ENCODE measurements at regions of chrX and their contacts with region 1.

Region 1: GRCh38 chrX:136209016-136209738 is 42.0 kb downstream of the MAP7D3 start:
- DNase-seq: peak; percentile 25 to 65
- H3K4me3 ChIP-seq: no peak overlapping the region
- H3K4me1 ChIP-seq: peaks cover 3% of the 10 kb centered on the region
- H3K27me3 ChIP-seq: no peaks in the 10 kb centered on the region

Region 2: GRCh38 chrX:136097871-136098805 is 111.0 kb before region 1 on chrX:
- in situ Hi-C with region 1: no loop called
- DNase-seq: no peak
- H3K4me3 ChIP-seq: no peak overlapping the region
- H3K4me1 ChIP-seq: no peaks in the 10 kb centered on the region
- H3K27me3 ChIP-seq: no peaks in the 10 kb centered on the region

Region 3: GRCh38 chrX:136694431-136695087 is 485.4 kb after region 1 on chrX:
- in situ Hi-C with region 1: loop called (anchors 25 kb)
- DNase-seq: peak; percentile 52 to 84
- H3K4me3 ChIP-seq: no peak overlapping the region
- H3K4me1 ChIP-seq: peaks cover 4% of the 10 kb centered on the region; the same call in 1 of the 2 replicates
- H3K27me3 ChIP-seq: no peaks in the 10 kb centered on the region

Measured in HAP-1 (cell line).